Left cardiac atrium (tissue), 4 donors: ENCODE measurements at regions of chr2 and their contacts with region 1.

Region 1: GRCh38 chr2:30447149-30448045 is at the start of gene LCLAT1:
- DNase-seq: peak; percentile 91
- ATAC-seq: peak; percentile 97 to 98
- total RNA-seq, gene LCLAT1: 13.4 to 13.8 TPM

Region 2: DNA sequence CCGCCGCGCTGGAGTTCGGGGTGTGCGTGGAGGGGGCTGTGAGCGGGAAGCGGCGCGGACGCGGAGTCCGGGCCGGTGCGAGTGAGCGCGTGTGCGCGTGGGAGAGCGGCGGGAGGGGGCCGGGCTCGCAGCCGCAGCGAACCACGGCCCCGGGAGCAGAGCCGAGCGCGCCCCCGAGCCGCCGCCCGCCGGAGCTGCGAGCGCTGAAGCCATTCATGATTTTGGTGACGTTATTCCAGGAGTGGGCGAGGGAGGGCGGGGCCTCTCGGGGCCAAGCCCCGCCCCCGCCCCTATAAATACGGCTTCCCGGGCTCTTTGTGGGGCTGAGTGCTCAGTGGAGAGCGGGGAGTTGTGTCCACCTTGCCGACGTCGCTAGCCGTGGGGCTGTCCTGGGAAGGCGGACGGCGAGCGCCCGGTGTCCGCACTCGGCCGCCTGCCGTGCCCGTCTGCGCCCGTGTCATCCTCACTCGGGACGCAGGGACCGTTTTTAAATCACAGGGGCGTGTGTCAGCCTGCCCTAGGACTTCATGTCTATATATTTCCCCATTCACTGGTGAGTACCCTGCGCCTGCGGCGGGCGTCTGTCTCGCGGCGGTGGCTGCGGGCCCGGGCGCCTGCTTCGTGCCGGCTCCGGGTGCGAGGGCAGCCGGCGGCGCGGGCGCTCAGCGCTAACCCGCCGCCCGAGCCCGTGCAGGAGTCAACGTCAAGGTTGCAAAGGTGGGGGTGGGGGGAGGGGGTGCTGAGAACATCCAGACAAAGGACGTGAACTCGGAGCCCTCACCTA is 216.0 kb before region 1 on chr2 and contains the start of gene LBH:
- intact Hi-C with region 1: loop called (anchors 5 to 10 kb)
- DNase-seq: peak; percentile 87
- ATAC-seq: peak; percentile 82 to 84
- total RNA-seq, gene LBH: 14.6 to 19.1 TPM

Region 3: DNA sequence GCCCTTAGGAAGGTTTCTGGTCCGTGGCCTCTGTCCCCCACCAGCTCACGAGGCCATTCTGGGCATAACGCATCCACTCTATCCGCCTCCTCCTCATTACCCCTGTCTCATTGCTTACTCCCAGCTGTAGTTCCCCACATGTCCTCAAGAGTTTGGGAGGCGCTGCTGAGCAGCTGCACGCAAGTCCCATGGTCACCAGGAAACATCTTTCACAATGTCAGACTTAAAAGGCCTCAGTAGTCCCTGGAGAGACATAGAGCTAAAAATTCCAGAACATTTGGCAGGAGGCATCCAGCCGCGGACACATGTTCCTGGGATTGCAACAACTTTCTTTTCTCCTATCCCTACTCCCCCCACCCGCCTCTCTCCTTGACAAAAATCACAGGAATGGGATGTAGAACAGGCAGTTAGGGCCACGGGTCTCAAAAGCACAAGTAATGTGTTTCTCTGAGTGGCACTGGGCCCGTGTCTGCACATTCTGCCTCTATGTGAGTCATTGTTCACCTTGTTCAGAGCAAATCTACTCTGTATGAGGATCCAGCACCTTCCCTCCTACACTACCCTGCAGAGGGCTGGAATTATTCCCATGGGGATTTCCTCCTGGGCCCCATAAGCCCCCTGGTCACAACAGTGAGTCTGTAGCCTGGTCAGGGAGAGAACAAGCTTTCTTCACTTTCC is 207.9 kb before region 1 on chr2:
- intact Hi-C with region 1: loop called (anchors 5 to 10 kb)
- DNase-seq: peak; percentile 68
- ATAC-seq: peak; percentile 63 to 89

Region 4: GRCh38 chr2:30366199-30366691 is 81.2 kb before region 1 on chr2:
- intact Hi-C with region 1: loop called in 1 of 2 experiments (anchors 10 kb)
- DNase-seq: no peak
- ATAC-seq: peak in 1 of 2 donors; percentile 26

Region 5: DNA sequence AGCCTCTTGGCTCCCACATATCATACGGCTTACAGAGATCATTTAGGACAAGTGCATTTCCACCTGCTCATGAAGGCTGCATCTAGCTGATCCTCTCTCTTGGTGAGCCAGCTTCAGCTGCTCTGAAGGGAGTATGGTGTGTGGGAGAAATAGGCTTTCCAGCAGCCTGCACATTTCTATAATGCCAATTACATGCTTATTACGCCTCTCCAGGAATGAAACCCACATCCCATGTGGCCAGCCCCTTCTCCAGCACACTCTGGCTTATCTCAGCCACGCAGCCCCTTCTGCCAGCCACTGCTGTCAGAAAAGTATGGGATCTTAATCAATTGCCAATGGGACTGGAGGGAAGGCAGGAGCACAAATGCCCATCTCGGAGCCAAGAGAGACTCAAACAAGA is 573.3 kb after region 1 on chr2:
- intact Hi-C with region 1: no loop called
- DNase-seq: no peak
- ATAC-seq: no peak